HCT116 (cell line): ENCODE measurements at regions of chr5 and their contacts with region 1.

Region 1: DNA sequence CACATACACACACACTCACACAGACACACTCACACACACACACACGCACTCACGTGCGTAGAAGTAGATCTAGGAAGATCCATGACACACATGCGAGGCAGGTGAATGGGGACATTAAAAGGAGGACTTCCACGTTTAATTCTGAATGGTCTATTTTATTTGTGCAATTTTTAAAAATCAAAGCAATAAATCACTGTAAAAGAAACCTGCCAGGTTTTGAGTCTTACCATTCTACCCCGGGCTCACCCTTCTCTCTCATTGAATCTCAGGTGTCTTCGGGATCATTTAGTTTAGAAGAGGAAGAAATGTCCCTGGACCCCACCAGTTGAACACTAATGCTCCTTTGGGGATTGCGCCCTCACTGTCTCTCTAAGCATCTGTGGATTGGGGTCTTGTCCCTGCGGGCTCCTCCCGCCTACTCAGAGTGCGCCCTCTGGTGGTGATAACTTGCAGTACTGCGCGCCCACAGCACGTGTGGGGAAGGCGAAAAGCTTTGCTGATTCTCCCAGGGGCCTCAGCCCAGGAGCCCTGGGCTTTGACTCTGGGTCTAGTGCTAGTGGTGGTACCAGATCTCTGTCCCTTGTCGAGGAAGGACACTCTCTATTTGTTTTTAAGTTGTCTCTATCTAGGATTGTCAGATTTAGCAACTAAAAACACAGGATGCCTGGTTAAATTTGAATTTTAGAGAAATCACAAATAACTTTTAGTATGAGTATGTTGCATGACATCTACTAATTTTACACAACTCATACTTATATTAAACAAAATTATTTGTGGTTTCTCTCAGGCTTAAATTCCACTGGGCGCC is 34.8 kb downstream of the BOD1 start:
- DNase-seq: peak; percentile 35
- ATAC-seq: peak; percentile 94
- H3K4me3 ChIP-seq: no peak overlapping the region
- H3K27ac ChIP-seq: no peak overlapping the region
- H3K4me1 ChIP-seq: no peaks in the 10 kb centered on the region
- H3K27me3 ChIP-seq: no peaks in the 10 kb centered on the region
- CTCF ChIP-seq: peak; percentile 71 to 96 (median 91)
- POLR2A ChIP-seq: no peak
- RAD21 ChIP-seq: peak; percentile 72

Region 2: GRCh38 chr5:173293817-173294672 is 287.6 kb before region 1 on chr5:
- CTCF ChIA-PET with region 1: interaction called, 13 read pairs
- POLR2A ChIA-PET with region 1: no interaction called
- RAD21 ChIA-PET with region 1: no interaction called
- intact Hi-C with region 1: no loop called
- DNase-seq: peak; percentile 56
- ATAC-seq: peak; percentile 93
- H3K4me3 ChIP-seq: peak overlapping the region; percentile 10 to 27; a peak in 3 of 4 replicates
- H3K27ac ChIP-seq: no peak overlapping the region
- H3K4me1 ChIP-seq: peaks cover 7 to 20% of the 10 kb centered on the region in 2 experiments; a peak in 3 of 4 replicates
- H3K27me3 ChIP-seq: no peaks in the 10 kb centered on the region
- CTCF ChIP-seq: peak; percentile 77 to 97 (median 89)
- POLR2A ChIP-seq: no peak
- RAD21 ChIP-seq: peak; percentile 99

Region 3: GRCh38 chr5:173736923-173737412 is 155.4 kb after region 1 on chr5:
- CTCF ChIA-PET with region 1: no interaction called
- POLR2A ChIA-PET with region 1: no interaction called
- RAD21 ChIA-PET with region 1: no interaction called
- intact Hi-C with region 1: no loop called
- DNase-seq: no peak
- ATAC-seq: no peak
- H3K4me3 ChIP-seq: no peak overlapping the region
- H3K27ac ChIP-seq: no peak overlapping the region
- H3K4me1 ChIP-seq: no peaks in the 10 kb centered on the region
- H3K27me3 ChIP-seq: no peaks in the 10 kb centered on the region
- CTCF ChIP-seq: no peak
- POLR2A ChIP-seq: no peak
- RAD21 ChIP-seq: no peak